Activated naive CD8-positive, alpha-beta T cell treated with anti-CD3 and anti-CD28 coated beads, Interleukin-2, amount 10 ng/mL, durations not matched to agents 7 days and 5 days (primary cell): ENCODE measurements at regions of chr1 and their contacts with region 1.

Region 1: GRCh38 chr1:27772933-27773825 is at the start of gene STX12:
- DNase-seq: peak; percentile 99
- ATAC-seq: peak; percentile 99
- H3K4me3 Mint-ChIP-seq: peak within 1 kb of the TSS; percentile 96
- H3K27ac Mint-ChIP-seq: peak within 1 kb of the TSS; percentile 98
- H3K4me1 Mint-ChIP-seq: peaks cover 22% of the 10 kb centered on the region
- H3K27me3 Mint-ChIP-seq: no peaks in the 10 kb centered on the region
- total RNA-seq, gene STX12: 24.2 to 31.9 TPM

Region 2: DNA sequence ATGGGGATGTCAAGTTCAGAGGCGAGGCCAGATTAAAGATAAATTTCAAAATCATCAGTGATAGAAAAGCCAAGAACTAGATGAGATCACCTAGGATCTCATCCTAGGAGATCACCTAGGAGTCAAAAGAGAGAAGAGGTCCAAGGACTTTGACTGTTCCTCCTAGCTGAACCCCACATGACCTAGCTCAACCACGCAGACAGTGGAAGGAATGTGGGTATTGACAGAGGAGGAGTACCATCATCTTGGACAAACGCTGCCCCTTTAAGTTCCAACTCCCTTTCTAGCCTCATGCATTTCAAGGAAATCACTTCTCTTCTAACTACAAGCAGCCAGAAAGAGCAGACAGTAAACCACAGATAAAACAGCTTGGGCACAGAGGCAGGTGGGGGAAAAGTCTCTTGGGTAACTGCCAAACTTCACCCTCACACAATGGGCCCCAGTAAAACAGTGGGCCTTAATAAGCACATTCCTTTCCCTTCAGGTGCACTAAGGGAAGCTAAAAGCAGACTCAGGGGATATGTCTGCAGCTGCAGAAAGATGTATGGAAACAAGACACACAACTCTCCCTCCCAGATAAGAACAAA is 59.9 kb before region 1 on chr1:
- POLR2A ChIA-PET with region 1: no interaction called
- DNase-seq: no peak
- ATAC-seq: no peak
- H3K4me3 Mint-ChIP-seq: no peak overlapping the region
- H3K27ac Mint-ChIP-seq: no peak overlapping the region
- H3K4me1 Mint-ChIP-seq: peaks cover 7% of the 10 kb centered on the region
- H3K27me3 Mint-ChIP-seq: peaks cover 12% of the 10 kb centered on the region

Region 3: GRCh38 chr1:27741121-27741520 is 32.1 kb before region 1 on chr1:
- POLR2A ChIA-PET with region 1: no interaction called
- DNase-seq: no peak
- ATAC-seq: no peak
- H3K4me3 Mint-ChIP-seq: no peak overlapping the region
- H3K27ac Mint-ChIP-seq: no peak overlapping the region
- H3K4me1 Mint-ChIP-seq: no peaks in the 10 kb centered on the region
- H3K27me3 Mint-ChIP-seq: no peaks in the 10 kb centered on the region

Region 4: DNA sequence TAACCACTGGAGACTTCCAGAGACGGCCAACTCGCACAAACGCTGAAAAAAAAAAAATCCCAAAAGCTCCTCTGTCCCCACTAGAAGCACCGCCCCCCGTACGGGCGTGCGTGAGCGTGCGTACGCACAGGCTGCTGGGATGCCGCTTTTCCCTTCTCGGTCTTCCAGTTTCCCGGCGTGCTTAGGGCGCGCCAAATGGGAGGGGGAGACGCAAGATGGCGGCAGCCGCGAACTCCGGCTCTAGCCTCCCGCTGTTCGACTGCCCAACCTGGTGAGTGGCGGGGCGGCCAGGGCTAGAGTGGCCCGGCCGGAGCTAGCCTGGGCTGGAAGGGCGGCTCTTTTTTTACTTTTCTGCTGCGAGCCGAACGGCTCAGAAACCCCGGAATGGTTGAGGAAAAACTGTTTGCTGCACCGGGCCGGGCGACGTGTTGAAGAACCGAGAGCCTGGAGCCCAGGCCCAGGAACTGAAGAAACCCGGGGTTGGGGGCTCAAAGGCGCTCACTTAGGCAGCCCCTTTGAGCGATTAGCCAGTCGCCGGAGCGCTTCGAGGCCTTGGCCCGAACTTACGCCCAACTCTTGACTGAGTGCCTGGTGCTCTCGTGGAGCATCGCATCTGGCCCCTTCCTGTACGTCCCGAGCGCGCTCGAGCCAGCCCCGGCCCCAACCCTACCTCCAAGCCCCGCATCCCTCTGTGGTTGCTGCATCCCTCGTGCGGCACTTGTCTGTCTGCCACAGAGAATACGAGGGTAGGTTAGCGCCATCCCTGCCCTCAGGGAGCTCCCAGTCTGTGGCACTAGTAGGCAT is 57.6 kb after region 1 on chr1 and contains the start of gene PPP1R8:
- POLR2A ChIA-PET with region 1: interaction called, 10 read pairs
- DNase-seq: peak; percentile 83
- ATAC-seq: peak; percentile 98
- H3K4me3 Mint-ChIP-seq: peak within 1 kb of the TSS; percentile 88
- H3K27ac Mint-ChIP-seq: peak within 1 kb of the TSS; percentile 82
- H3K4me1 Mint-ChIP-seq: peaks cover 24% of the 10 kb centered on the region
- H3K27me3 Mint-ChIP-seq: no peaks in the 10 kb centered on the region
- total RNA-seq, gene PPP1R8: 52.9 to 54.4 TPM

Region 5: GRCh38 chr1:27894521-27894920 is 121.3 kb after region 1 on chr1:
- POLR2A ChIA-PET with region 1: no interaction called
- DNase-seq: no peak
- ATAC-seq: no peak
- H3K4me3 Mint-ChIP-seq: no peak overlapping the region
- H3K27ac Mint-ChIP-seq: no peak overlapping the region
- H3K4me1 Mint-ChIP-seq: peaks cover 26% of the 10 kb centered on the region
- H3K27me3 Mint-ChIP-seq: no peaks in the 10 kb centered on the region

Region 6: DNA sequence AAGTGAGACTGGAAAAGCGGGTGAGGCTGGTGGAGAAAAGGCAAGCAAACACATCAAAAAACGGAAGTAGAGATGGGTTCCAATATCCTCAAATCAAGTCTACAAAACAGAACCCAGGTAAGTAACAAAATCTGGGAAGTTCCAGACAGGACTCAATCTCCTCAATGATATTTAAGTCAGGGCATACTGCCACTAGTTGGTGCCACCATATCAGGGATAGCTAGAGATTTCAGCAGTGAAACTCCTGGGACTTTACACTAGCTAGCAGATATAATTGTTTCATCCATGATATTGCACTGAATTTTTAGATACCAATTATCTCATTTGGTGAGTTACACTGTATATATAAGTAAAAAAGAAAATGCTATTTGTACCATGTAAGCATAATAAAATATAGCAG is 263.3 kb after region 1 on chr1:
- POLR2A ChIA-PET with region 1: no interaction called
- DNase-seq: no peak
- ATAC-seq: no peak
- H3K4me3 Mint-ChIP-seq: no peak overlapping the region
- H3K27ac Mint-ChIP-seq: no peak overlapping the region
- H3K4me1 Mint-ChIP-seq: no peaks in the 10 kb centered on the region
- H3K27me3 Mint-ChIP-seq: no peaks in the 10 kb centered on the region